A549 (cell line): ENCODE measurements at regions of chr9 and their contacts with region 1.

Region 1: GRCh38 chr9:95127249-95128176 is 190.0 kb downstream of the FANCC start:
- DNase-seq: peak; percentile 74 to 76
- ATAC-seq: peak; percentile 90 to 91
- H3K4me3 ChIP-seq: no peak overlapping the region
- H3K27ac ChIP-seq: peak overlapping the region; percentile 37 to 72; a peak in 5 of 6 replicates
- H3K4me1 ChIP-seq: peaks cover 33% of the 10 kb centered on the region
- CTCF ChIP-seq: peak; percentile 95
- EP300 ChIP-seq: no peak
- POLR2A ChIP-seq: no peak
- RAD21 ChIP-seq: peak; percentile 86 to 92

Region 2: DNA sequence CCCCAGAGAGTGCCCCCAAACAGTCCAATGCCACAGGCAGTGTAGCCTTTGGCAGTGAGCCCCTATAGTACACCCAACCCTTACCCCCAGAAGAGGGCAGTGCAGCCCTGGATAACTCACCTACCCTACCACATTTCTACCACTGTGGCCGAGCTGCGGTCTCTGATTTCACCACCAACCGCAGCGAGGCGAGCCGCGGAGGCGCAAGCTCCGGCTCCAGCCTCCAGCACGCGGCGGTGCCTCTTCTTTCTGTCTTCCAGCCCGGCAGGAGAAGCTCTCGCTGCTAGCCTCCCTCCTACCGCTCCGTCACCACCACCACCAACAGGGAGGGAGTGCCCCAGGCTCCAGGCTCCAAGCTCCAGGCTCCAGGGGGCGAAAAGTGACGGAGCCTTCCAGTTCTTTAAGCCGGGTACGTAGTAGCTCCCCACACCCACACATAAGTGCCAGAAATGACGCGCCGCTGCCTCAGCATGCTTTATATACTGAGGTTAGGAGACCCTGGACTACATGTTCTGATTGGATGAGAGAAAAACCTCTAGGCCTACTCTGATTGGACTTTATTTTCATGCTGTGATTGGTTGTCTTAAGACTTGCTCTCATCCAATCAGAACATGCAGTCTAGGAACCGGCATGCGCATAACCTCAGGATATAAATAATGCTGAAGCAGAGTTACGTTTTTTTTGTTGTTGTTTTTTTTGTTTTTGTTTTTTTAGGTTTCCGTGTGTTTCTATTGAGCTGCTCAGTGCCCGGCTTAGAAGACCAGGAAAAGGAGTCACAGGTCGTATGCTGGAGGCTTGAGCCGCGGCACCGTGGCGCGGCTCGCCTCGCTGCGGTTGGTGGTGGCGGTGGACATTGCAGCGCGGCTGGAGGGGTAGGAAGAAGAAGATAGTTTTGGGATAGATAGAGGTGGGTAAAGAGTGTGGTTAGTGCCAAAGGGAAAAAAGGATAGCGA is 572.8 kb before region 1 on chr9 and contains the start of gene PCAT7:
- CTCF ChIA-PET with region 1: interaction called, 16 read pairs
- POLR2A ChIA-PET with region 1: interaction called, 4 read pairs
- DNase-seq: peak; percentile 64 to 88
- ATAC-seq: peak; percentile 99
- H3K4me3 ChIP-seq: peak within 1 kb of the TSS; percentile 63
- H3K27ac ChIP-seq: peak within 1 kb of the TSS; percentile 80 to 87
- H3K4me1 ChIP-seq: peaks cover 8% of the 10 kb centered on the region; the same call in 1 of the 3 replicates
- CTCF ChIP-seq: peak; percentile 86
- EP300 ChIP-seq: no peak
- POLR2A ChIP-seq: peak; percentile 71
- RAD21 ChIP-seq: peak; percentile 78 to 88
- polyA plus RNA-seq, gene PCAT7: 2.7 and 2.8 TPM in 2 replicates

Region 3: GRCh38 chr9:94672811-94673487 is 454.6 kb before region 1 on chr9:
- CTCF ChIA-PET with region 1: interaction called, 284 read pairs
- POLR2A ChIA-PET with region 1: interaction called, 5 read pairs
- DNase-seq: peak in 1 of 2 experiments; percentile 37
- ATAC-seq: no peak
- H3K4me3 ChIP-seq: no peak overlapping the region
- H3K27ac ChIP-seq: peak overlapping the region; percentile 37 to 70; a peak in 5 of 6 replicates
- H3K4me1 ChIP-seq: peaks cover 25% of the 10 kb centered on the region; the same call in 2 of the 3 replicates
- CTCF ChIP-seq: no peak
- EP300 ChIP-seq: no peak
- POLR2A ChIP-seq: no peak
- RAD21 ChIP-seq: no peak

Region 4: GRCh38 chr9:95092262-95093072 is 35.0 kb before region 1 on chr9:
- CTCF ChIA-PET with region 1: interaction called, 11 read pairs
- POLR2A ChIA-PET with region 1: interaction called, 9 read pairs
- DNase-seq: no peak
- ATAC-seq: peak; percentile 6 to 12; a peak in 5 of 6 replicates
- H3K4me3 ChIP-seq: no peak overlapping the region
- H3K27ac ChIP-seq: peak overlapping the region; percentile 63 to 78
- H3K4me1 ChIP-seq: peaks cover 68% of the 10 kb centered on the region
- CTCF ChIP-seq: no peak
- EP300 ChIP-seq: no peak
- POLR2A ChIP-seq: no peak
- RAD21 ChIP-seq: no peak

Region 5: GRCh38 chr9:95116003-95116807 is 11.3 kb before region 1 on chr9:
- CTCF ChIA-PET with region 1: interaction called, 58 read pairs
- POLR2A ChIA-PET with region 1: interaction called, 3 read pairs
- DNase-seq: peak in 1 of 2 experiments; percentile 47
- ATAC-seq: peak; percentile 45 to 63; a peak in 4 of 6 replicates
- H3K4me3 ChIP-seq: no peak overlapping the region
- H3K27ac ChIP-seq: peak overlapping the region in 1 of 2 experiments; percentile 25; a peak in 2 of 6 replicates
- H3K4me1 ChIP-seq: no peaks in the 10 kb centered on the region
- CTCF ChIP-seq: peak; percentile 30; the same call in 2 of the 3 replicates
- EP300 ChIP-seq: no peak
- POLR2A ChIP-seq: no peak
- RAD21 ChIP-seq: peak; percentile 33 to 59; a peak in 3 of 5 replicates

Region 6: DNA sequence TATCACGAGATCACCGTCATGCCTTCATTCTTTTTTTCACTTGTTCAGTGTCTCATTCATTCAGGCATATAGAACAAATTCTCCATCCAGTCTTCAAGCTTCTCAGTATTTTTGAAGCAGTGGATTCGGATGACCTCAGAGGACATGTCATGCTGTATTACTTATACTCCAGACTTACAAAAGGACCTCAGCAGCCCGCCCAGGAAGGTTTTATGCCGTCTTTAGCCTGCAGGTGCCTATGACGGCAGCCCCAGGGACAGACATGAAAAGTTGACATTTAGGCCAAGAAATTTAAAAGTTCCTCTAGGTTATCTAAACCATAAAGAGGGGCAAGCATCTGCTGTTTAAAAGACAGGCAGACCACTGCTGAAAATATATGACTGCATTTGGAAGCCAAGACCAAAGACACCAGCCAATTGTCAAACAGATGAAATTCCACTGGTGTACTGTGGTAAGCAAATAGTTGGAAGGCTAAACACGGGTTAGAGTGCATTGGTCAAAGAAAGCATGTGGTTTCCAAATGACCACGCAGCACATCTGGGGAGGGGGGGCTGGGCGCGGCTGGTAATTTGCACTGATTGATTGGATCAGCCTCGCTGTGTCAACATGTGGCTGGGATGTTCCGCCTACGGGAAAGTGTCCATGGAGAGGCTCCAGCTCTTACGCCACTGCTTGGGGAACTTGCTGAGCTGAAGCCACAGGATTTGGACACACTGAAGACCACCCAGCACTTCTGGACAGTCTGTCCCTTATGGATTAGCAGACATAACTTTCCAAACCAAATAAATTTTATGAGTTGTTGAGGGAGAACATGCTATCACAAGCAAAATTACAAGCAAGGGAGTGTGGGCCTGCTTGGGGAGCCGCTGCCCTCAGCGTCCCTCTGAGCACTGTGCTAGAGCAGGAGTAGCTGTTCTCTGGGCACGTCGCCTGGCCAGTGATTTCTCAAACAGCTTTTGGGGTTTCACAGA is 16.4 kb after region 1 on chr9:
- CTCF ChIA-PET with region 1: interaction called, 30 read pairs
- POLR2A ChIA-PET with region 1: interaction called, 6 read pairs
- DNase-seq: no peak
- ATAC-seq: no peak
- H3K4me3 ChIP-seq: no peak overlapping the region
- H3K27ac ChIP-seq: no peak overlapping the region
- H3K4me1 ChIP-seq: peaks cover 9% of the 10 kb centered on the region
- CTCF ChIP-seq: no peak
- EP300 ChIP-seq: no peak
- POLR2A ChIP-seq: no peak
- RAD21 ChIP-seq: no peak

Region 7: DNA sequence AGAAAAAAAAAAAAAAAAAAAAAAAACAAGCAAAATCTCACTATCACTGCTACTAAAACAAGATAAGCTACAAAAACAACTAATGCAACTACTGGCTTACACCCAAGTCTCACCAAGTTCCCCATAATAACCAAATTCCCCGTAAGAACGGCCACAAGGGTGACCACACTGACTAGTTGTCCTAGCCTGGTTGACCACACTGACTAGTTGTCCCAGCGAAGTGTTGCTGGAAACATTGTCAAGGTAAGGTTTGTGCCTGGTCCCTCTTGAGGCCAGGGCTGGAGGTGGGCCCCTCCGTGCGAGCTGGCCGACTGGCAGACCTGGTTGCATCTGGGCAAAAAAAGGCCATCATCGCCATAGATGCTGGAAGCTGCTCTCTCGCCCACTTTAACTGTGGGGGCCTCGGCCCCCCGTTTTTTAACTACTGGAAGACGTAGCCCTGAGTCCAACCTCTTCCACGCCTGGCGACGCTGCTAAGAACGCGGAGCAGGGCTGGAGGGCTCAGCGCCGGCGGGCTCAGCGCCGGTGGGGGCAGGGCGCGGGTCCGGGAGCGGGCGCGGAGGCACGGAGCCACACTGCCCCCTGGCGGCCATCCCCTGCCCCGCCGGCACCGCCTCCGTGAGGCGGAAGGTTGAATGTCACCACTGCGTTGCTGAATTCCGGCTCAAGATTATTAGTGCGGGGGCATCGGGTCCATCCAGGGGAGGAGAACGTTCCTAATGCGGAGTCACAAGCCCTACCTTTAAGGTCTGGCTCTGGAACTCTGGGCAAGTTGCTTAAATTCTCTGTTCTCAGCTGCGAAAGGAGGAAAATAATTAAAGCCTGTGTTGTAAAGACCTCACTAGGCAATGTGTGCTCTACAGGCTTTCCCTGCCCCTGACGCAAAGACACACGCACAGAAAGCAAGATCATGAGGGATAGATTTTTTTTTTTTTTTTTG is 1090.5 kb after region 1 on chr9:
- CTCF ChIA-PET with region 1: interaction called, 12 read pairs
- POLR2A ChIA-PET with region 1: no interaction called
- DNase-seq: peak; percentile 74 to 85
- ATAC-seq: peak; percentile 90 to 97
- H3K4me3 ChIP-seq: 0 out of 3 replicates have a peak overlapping the region, but pooled peaks have one; percentile 7
- H3K27ac ChIP-seq: peak overlapping the region; percentile 70 to 89
- H3K4me1 ChIP-seq: peaks cover 10% of the 10 kb centered on the region
- CTCF ChIP-seq: peak; percentile 97
- EP300 ChIP-seq: no peak
- POLR2A ChIP-seq: no peak
- RAD21 ChIP-seq: peak; percentile 87 to 100